Left cardiac atrium (tissue), 4 donors: ENCODE measurements at regions of chr1 and their contacts with region 1.

Region 1: DNA sequence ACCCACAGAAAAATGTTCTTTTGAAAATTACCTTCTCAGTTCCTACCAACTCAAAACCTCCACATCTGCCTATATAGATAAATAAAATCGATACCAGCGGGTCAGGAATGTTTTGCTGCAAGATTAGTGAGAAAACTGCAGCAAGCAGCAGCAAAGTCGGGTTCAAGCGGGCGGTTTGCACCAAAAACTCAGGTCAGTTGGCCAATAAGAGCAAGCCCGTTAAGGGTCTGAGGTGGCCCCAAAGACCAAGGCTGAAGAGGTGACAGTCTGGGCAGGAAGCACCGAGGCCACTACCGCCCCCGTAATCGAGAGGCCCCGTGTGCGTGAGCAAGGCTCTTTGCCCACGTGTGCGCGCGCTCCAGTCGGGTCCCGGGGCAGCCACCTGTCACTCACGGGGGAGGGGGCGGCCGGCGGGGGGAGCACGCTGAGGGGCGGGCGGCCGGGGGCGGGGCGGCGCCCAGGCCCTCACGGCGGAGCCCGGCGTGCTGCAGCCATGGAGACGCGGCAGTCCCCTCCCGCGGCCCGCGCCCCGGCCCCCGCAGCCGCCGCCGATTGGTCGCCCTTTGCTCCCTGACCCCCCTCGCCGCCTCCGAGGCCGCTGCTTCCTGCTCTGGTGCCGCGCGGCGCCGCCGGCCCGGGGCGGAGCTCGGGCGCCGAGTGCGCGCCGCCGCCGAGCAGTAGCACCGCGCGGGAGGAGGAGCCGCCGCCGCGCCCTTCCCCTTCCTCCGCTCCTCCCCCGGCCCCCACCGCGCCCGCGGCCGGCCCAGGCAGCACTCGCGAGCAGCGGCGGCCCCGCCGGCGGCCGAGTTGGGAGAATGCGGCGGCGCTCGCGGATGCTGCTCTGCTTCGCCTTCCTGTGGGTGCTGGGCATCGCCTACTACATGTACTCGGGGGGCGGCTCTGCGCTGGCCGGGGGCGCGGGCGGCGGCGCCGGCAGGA is at the start of gene GALNT2:
- DNase-seq: peak; percentile 92
- ATAC-seq: peak; percentile 96
- total RNA-seq, gene GALNT2: 36.8 to 50.7 TPM

Region 2: GRCh38 chr1:229685149-229685548 is 381.6 kb before region 1 on chr1:
- intact Hi-C with region 1: no loop called
- DNase-seq: no peak
- ATAC-seq: no peak

Region 3: DNA sequence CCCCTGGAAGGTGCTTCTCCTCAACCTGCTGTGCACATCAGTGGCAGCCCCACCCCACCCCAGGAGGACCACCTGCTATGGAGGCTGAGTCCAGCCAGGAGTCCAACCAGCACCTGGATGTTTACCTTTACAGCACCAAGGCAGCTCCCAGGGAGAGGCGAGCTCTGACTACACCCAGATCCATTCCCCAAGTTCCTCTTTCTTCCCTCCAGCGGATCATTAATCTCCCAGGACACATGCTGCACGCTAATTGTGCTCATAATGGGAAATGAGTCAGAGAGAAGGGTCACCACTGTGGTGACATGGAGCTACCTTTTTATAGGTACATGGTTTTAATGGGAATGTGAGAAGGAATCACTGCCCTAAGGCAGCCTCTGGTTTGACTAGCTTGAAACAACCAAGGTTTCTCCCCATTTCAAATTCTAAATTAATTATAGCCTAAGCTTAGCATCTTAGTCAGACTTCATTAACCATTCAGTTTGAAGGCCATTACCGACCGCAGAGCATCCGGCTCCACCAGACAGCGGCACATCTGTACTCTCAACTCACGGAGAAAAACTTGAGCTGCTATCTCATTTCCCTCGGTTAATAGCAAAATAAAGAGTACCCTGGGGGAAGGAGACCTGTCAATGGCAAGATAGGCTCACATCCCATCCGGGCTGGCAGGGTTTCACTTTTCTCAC is 172.8 kb before region 1 on chr1:
- intact Hi-C with region 1: loop called in 1 of 2 experiments (anchors 10 kb)
- DNase-seq: no peak
- ATAC-seq: no peak

Region 4: GRCh38 chr1:230127105-230128054 is 60.6 kb after region 1 on chr1:
- intact Hi-C with region 1: no loop called
- DNase-seq: no peak
- ATAC-seq: peak in 1 of 2 donors; percentile 18

Region 5: GRCh38 chr1:230215031-230215430 is 148.3 kb after region 1 on chr1:
- intact Hi-C with region 1: loop called in 1 of 2 experiments (anchors 5 kb)
- DNase-seq: peak; percentile 71
- ATAC-seq: peak; percentile 85 to 93

Region 6: GRCh38 chr1:230231774-230232145 is 165.0 kb after region 1 on chr1:
- intact Hi-C with region 1: loop called in 1 of 2 experiments (anchors 10 kb)
- DNase-seq: peak; percentile 78
- ATAC-seq: peak; percentile 84 to 94